Prostate gland (tissue), 2 donors: ENCODE measurements at regions of chr7 and their contacts with region 1.

Region 1: GRCh38 chr7:79176859-79177477 is 276.5 kb downstream of the MAGI2 start:
- DNase-seq: peak; percentile 7
- H3K4me3 ChIP-seq: no peak overlapping the region
- H3K27ac ChIP-seq: no peak overlapping the region
- H3K4me1 ChIP-seq: no peaks in the 10 kb centered on the region
- H3K27me3 ChIP-seq: no peaks in the 10 kb centered on the region
- CTCF ChIP-seq: peak in 3 of 4 experiments; percentile 21 to 55 (median 50)
- POLR2A ChIP-seq: no peak

Region 2: GRCh38 chr7:78134256-78134655 is 1042.7 kb before region 1 on chr7:
- intact Hi-C with region 1: loop called (anchors 10 kb)
- DNase-seq: no peak
- H3K4me3 ChIP-seq: no peak overlapping the region
- H3K27ac ChIP-seq: no peak overlapping the region
- H3K4me1 ChIP-seq: no peaks in the 10 kb centered on the region
- H3K27me3 ChIP-seq: no peaks in the 10 kb centered on the region
- CTCF ChIP-seq: peak in 2 of 4 experiments; percentile 27 to 47
- POLR2A ChIP-seq: no peak

Region 3: GRCh38 chr7:78510580-78511188 is 666.3 kb before region 1 on chr7:
- intact Hi-C with region 1: loop called (anchors 5 kb)
- DNase-seq: peak; percentile 27
- H3K4me3 ChIP-seq: no peak overlapping the region
- H3K27ac ChIP-seq: no peak overlapping the region
- H3K4me1 ChIP-seq: no peaks in the 10 kb centered on the region
- H3K27me3 ChIP-seq: no peaks in the 10 kb centered on the region
- CTCF ChIP-seq: peak in 3 of 4 experiments; percentile 41 to 68 (median 62)
- POLR2A ChIP-seq: no peak